ENCODE measurements at regions of chr18 and their contacts with region 1.

Region 1: DNA sequence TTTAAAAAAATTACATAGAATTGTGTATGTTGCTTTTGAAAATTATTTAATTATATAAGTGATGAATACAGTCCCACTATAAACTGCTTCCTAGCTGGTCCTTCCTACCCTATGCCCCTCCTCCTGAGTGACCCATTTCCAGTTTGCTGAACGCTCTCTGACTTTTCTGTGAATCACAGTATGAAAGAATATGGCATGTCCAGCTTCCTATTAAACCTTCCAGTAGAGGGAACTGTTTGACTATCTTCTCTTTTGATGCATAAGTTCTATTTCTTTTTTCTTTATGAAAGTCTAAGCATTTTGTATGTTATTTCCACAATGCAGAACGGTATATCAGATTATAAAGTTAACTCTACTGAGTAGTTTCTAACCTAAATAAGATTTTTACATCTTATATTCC is 41.3 kb downstream of the PSMG2 start:
- DNase-seq: no peak
- H3K4me3 ChIP-seq: no peak overlapping the region
- H3K27me3 ChIP-seq: no peaks in the 10 kb centered on the region
- CTCF ChIP-seq: peak; percentile 63

Region 2: GRCh38 chr18:12606592-12607315 is 137.3 kb before region 1 on chr18:
- CTCF ChIA-PET with region 1: no interaction called
- POLR2A ChIA-PET with region 1: no interaction called
- DNase-seq: no peak
- H3K4me3 ChIP-seq: no peak overlapping the region
- H3K27me3 ChIP-seq: no peaks in the 10 kb centered on the region
- CTCF ChIP-seq: no peak

Region 3: GRCh38 chr18:12883684-12884405 is 139.7 kb after region 1 on chr18 and contains the start of gene PTPN2:
- CTCF ChIA-PET with region 1: interaction called, 44 read pairs
- POLR2A ChIA-PET with region 1: interaction called, 3 read pairs
- DNase-seq: peak; percentile 72
- H3K4me3 ChIP-seq: peak within 1 kb of the TSS; percentile 85
- H3K27me3 ChIP-seq: no peaks in the 10 kb centered on the region
- CTCF ChIP-seq: no peak
- polyA plus RNA-seq, gene PTPN2: 14.5 and 19.0 TPM in 2 replicates

Region 4: GRCh38 chr18:12904012-12904516 is 160.0 kb after region 1 on chr18:
- CTCF ChIA-PET with region 1: interaction called, 26 read pairs
- POLR2A ChIA-PET with region 1: no interaction called
- DNase-seq: no peak
- H3K4me3 ChIP-seq: no peak overlapping the region
- H3K27me3 ChIP-seq: 0 out of 2 replicates have a peak, but pooled peaks cover 1% of the 10 kb centered on the region
- CTCF ChIP-seq: no peak

Region 5: DNA sequence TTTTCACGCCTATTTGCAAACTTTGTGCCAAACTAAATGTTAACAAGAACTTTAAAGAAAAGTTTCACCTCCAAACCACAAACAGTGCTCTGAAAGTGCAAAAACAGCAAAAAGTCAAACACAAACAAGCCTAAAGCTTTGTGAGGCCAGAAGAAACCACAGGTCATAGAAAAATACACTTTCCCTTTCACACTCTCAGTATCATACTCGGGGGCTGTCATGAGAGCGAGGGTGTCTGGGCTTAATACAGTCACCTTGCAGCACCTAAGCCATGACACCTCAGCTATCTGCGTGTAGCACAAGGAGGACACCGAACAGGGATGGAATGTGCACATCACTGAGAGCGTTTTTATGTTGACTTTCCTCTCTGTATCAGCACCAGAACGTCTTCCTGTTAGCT is 177.1 kb after region 1 on chr18:
- CTCF ChIA-PET with region 1: interaction called, 11 read pairs
- POLR2A ChIA-PET with region 1: no interaction called
- DNase-seq: no peak
- H3K4me3 ChIP-seq: no peak overlapping the region
- H3K27me3 ChIP-seq: peaks cover 2% of the 10 kb centered on the region; the same call in 1 of the 2 replicates
- CTCF ChIP-seq: no peak

Region 6: GRCh38 chr18:13446610-13447461 is 702.7 kb after region 1 on chr18:
- CTCF ChIA-PET with region 1: no interaction called
- POLR2A ChIA-PET with region 1: no interaction called
- DNase-seq: no peak
- H3K4me3 ChIP-seq: no peak overlapping the region
- H3K27me3 ChIP-seq: no peaks in the 10 kb centered on the region
- CTCF ChIP-seq: no peak